ENCODE measurements at regions of chr1 and their contacts with region 1.

Region 1: DNA sequence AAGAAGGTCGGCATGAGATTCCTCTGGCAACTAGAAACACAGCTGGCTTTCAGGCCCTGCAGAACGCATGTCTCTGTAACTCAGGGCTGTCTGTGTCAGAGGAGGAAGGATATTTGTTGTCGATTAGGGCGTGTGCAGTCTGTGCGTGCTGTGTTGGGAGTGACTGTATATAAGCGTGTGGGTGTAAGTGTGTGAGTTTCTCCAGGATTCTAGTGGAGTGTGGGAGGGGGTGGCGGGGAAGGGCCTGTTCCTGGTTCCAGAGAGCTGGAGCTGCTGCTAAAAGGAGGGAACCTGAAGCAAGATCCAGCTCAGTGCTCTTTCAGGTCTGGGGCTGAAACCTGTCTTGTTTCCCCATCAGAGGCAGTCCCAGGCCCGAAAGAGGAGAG is 74.3 kb downstream of the SLC16A1 start:
- DNase-seq: no peak
- H3K4me3 ChIP-seq: no peak overlapping the region
- H3K27ac ChIP-seq: no peak overlapping the region
- H3K4me1 ChIP-seq: no peaks in the 10 kb centered on the region
- H3K27me3 ChIP-seq: no peaks in the 10 kb centered on the region
- CTCF ChIP-seq: no peak

Region 2: DNA sequence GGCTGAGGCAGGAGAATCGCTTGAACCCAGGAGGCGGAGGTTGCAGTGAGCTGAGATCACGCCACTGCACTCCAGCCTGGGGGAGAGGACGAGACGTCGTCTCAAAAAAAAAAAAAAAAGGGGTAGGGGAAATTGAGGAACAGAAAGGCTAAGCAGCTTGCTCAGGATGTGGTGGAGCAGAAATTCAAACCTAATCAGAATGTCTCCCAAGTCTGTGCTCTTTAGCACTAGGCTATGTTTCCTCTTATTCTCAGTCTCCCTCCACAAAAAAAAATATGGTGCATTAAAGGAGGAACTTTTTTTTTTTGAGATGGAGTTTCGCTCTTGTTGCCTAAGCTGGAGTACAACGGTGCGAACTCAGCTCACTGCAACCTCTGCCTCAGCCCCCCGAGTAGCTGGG is 39.9 kb before region 1 on chr1:
- CTCF ChIA-PET with region 1: interaction called, 18 read pairs
- POLR2A ChIA-PET with region 1: no interaction called
- intact Hi-C with region 1: no loop called
- DNase-seq: no peak
- H3K4me3 ChIP-seq: no peak overlapping the region
- H3K27ac ChIP-seq: no peak overlapping the region
- H3K4me1 ChIP-seq: no peaks in the 10 kb centered on the region
- H3K27me3 ChIP-seq: peaks cover 8% of the 10 kb centered on the region
- CTCF ChIP-seq: no peak

Region 3: GRCh38 chr1:112866151-112866550 is 15.6 kb before region 1 on chr1:
- CTCF ChIA-PET with region 1: no interaction called
- POLR2A ChIA-PET with region 1: no interaction called
- intact Hi-C with region 1: no loop called
- DNase-seq: no peak
- H3K4me3 ChIP-seq: no peak overlapping the region
- H3K27ac ChIP-seq: no peak overlapping the region
- H3K4me1 ChIP-seq: no peaks in the 10 kb centered on the region
- H3K27me3 ChIP-seq: no peaks in the 10 kb centered on the region
- CTCF ChIP-seq: no peak

Region 4: DNA sequence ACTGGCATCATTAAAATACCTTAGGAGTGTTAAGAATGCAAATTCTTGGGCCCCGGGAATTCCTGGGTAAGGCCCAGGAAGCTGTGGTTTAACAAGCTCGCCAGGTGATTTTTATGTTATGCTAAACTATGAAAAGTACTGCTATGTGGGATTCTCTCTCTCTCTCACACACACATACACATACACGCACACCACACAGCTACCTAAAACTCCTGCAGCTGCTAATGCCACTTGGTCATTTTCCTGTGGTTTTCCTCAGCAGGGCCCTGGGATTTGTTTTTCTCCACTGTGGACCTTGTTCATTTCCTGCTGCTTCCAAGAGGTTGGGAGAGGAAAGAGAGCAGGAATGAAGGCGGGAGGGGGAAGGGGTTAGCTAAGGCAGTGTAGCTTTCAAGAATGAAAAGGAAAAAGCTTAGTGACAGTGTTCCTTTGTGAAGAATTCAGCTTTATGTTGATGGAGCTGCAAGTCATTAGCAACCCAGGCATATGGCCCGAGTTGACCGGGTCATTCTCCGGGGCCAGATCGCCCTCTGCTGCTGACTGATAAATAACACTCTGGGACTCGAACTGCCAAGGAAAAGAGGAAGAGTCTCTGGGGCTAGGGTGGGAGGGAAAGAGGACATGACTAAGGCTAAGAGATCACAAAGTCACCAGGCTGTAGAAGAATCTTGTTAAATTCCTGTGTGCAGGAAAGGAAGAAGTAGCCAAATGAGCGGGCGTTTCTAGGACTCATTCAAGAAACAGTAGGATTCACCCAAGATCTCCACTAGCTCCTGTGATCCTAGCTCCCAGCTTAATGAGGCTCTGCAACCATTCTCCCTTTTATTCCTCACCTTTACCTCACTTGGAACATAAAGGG is 160.8 kb after region 1 on chr1:
- CTCF ChIA-PET with region 1: no interaction called
- POLR2A ChIA-PET with region 1: no interaction called
- intact Hi-C with region 1: loop called (anchors 2 kb)
- DNase-seq: peak; percentile 64
- H3K4me3 ChIP-seq: no peak overlapping the region
- H3K27ac ChIP-seq: no peak overlapping the region
- H3K4me1 ChIP-seq: no peaks in the 10 kb centered on the region
- H3K27me3 ChIP-seq: no peaks in the 10 kb centered on the region
- CTCF ChIP-seq: peak; percentile 54

Region 5: DNA sequence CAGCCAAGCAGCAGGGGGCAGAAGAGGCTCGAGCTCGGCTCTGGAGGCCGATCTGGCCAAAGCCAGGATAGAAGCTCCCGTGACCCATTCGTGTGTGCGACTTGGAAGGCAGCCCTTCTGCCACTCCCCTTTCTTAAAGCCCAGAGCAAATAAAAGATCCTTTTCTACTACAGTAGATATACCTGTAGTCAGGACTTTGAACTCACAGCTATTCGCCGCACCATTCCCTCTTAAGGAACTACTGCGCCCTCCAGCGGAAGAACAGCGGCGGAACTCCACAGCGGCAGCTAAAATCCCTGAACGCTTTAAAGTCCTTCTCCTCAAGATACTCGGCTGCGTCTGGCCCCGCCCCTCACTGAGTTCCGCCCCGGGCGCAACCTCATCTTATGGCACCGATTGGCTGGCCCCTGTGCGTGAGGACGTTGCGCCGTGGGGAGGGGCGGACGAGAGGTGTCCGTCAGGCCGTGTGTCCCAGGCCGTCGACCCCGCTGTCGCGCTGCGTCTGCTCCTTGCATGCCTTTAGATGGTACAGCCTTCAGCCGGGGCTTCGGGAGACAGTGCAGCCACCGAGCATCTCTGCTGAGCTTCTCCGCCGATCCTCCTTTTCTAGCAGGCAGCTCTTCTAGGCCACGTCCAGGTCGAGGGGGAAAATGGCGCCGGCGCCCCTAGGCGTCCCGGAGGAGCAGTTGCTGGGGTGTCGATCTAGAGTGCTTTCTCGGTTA is 191.2 kb after region 1 on chr1 and contains the start of gene LRIG2:
- CTCF ChIA-PET with region 1: interaction called, 8 read pairs
- POLR2A ChIA-PET with region 1: no interaction called
- intact Hi-C with region 1: loop called (anchors 2 kb)
- DNase-seq: peak; percentile 99
- H3K4me3 ChIP-seq: peak within 1 kb of the TSS; percentile 71
- H3K27ac ChIP-seq: peak within 1 kb of the TSS; percentile 75
- H3K4me1 ChIP-seq: peaks cover 10% of the 10 kb centered on the region
- H3K27me3 ChIP-seq: no peaks in the 10 kb centered on the region
- CTCF ChIP-seq: peak; percentile 98
- total RNA-seq, gene LRIG2: 13.9 and 14.8 TPM in 2 replicates

Region 6: DNA sequence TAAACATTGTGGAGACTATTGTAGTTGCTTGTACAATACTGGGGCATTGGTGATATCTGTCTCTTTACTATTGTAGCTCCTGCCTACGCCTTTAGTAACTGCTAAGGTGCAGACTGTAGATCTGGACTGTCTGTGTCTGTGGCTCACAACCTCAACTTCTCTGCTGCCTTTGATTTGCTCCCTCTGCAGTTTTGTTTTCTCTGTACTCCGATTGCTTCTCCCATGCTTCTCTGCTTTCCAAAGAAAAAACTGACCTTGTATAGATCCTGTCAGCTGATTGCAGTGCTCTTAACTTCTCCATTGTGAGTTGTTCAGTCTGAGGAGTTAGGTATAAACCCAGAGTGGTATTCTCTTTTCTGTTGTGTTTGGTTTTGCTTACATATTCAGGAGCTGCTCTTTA is 523.8 kb after region 1 on chr1:
- CTCF ChIA-PET with region 1: no interaction called
- POLR2A ChIA-PET with region 1: no interaction called
- intact Hi-C with region 1: no loop called
- DNase-seq: no peak
- H3K4me3 ChIP-seq: no peak overlapping the region
- H3K27ac ChIP-seq: no peak overlapping the region
- H3K4me1 ChIP-seq: peaks cover 4% of the 10 kb centered on the region
- H3K27me3 ChIP-seq: peaks cover 15% of the 10 kb centered on the region
- CTCF ChIP-seq: no peak